ENCODE measurements at regions of chr7 and their contacts with region 1.

Region 1: DNA sequence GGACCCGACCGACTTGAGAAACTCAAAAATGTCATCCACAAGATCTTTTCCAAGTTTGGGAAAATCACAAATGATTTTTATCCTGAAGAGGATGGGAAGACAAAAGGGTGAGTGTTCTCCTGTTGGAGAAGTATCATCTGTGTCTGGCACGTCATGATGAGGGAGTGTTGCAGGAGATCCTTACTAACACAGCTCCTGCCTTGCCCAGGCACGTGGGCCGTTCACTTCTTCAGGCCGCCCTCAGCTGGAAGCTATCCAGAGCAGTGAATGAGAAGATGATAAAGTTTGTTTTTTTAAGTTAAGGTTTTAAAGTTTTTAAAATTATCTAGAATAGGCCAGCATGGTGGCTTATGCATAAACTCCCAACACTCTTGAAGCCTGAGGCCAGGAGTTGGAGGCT is 6.2 kb downstream of the EIF3B start:
- DNase-seq: no peak
- H3K4me3 ChIP-seq: no peak overlapping the region
- H3K27ac ChIP-seq: no peak overlapping the region
- H3K4me1 ChIP-seq: peaks cover 11% of the 10 kb centered on the region
- H3K27me3 ChIP-seq: no peaks in the 10 kb centered on the region
- CTCF ChIP-seq: no peak
- POLR2A ChIP-seq: no peak

Region 2: GRCh38 chr7:1664711-1665548 is 695.9 kb before region 1 on chr7:
- CTCF ChIA-PET with region 1: interaction called, 3 read pairs
- POLR2A ChIA-PET with region 1: no interaction called
- dilution Hi-C with region 1: no loop called
- intact Hi-C with region 1: loop called (anchors 5 kb)
- DNase-seq: peak; percentile 66
- H3K4me3 ChIP-seq: peak overlapping the region; percentile 33 to 67 (median 43)
- H3K27ac ChIP-seq: no peak overlapping the region
- H3K4me1 ChIP-seq: peaks cover 3% of the 10 kb centered on the region
- H3K27me3 ChIP-seq: peaks cover 32 to 35% of the 10 kb centered on the region in 2 experiments
- CTCF ChIP-seq: peak; percentile 59 to 87
- POLR2A ChIP-seq: no peak

Region 3: GRCh38 chr7:2288503-2288902 is 72.3 kb before region 1 on chr7:
- CTCF ChIA-PET with region 1: no interaction called
- POLR2A ChIA-PET with region 1: no interaction called
- dilution Hi-C with region 1: no loop called
- intact Hi-C with region 1: no loop called
- DNase-seq: no peak
- H3K4me3 ChIP-seq: no peak overlapping the region
- H3K27ac ChIP-seq: no peak overlapping the region
- H3K4me1 ChIP-seq: no peaks in the 10 kb centered on the region
- H3K27me3 ChIP-seq: no peaks in the 10 kb centered on the region
- CTCF ChIP-seq: no peak
- POLR2A ChIP-seq: no peak